ENCODE measurements at regions of chr3 and their contacts with region 1.

Region 1: DNA sequence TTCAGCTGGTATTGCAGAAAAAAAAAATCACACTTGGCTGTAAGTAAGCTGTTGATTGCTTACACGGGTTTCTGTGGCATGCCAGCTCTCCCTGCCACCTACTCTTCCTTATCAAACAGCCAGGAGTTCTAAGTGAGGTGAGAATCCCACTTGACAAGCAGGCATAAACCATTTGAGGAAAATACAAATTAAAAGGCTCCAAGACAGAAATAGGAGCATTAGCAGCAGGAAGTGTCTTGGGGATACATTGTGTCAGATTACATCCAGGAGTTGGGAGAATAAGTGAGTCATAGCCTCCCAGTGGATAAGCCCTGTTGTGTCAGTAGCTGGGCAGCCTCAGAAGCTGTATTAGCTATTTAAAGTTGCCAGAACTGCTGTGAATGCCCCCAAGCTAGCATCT is 256.0 kb downstream of the CNTN4 start:
- DNase-seq: no peak
- ATAC-seq: peak in 3 of 4 donors; percentile 77 to 94 (median 92)
- H3K4me3 ChIP-seq: no peak overlapping the region
- H3K27ac ChIP-seq: no peak overlapping the region
- H3K4me1 ChIP-seq: peaks cover 0 to 12% (median 5%) of the 10 kb centered on the region in 12 donors
- H3K27me3 ChIP-seq: no peaks in the 10 kb centered on the region
- CTCF ChIP-seq: no peak
- POLR2A ChIP-seq: no peak

Region 2: DNA sequence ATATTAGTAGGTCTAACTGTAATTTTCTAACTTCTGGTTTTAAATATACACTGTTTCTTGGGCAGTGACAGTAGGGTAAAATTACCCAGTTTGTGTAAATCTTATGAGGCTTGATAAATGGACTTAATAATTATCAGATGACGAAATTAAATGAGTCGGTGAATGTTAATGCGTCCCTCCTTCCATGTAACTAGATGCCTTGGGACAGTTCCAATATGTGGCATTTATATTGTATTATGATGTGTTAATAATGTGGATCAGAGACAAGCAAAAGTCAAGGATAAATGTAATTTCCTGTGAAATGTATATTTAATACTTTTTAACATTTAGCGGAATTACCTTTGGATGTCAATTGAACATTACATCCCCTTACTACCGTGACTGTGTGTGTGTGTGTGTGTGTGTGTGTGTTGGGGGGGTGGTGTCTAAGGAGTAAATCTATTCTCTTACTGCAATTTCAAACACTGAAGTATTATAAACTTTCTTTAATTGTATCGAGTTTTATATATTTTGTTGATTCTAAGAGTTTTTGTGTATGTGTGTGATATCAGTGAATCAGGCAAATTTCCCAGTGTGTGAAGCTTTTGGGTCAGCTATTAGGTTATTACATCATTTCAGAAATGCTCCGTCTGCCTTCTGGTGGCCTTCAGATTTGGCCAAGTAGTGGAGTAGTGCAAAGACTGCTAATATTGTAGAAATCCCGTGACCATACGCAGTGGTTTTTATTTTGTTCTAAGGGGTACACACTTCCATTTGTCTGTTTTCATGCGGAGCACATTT is 206.0 kb before region 1 on chr3:
- intact Hi-C with region 1: no loop called
- DNase-seq: no peak
- ATAC-seq: no peak
- H3K4me3 ChIP-seq: no peak overlapping the region
- H3K27ac ChIP-seq: no peak overlapping the region
- H3K4me1 ChIP-seq: no peaks in the 10 kb centered on the region
- H3K27me3 ChIP-seq: no peaks in the 10 kb centered on the region
- CTCF ChIP-seq: no peak
- POLR2A ChIP-seq: no peak

Region 3: DNA sequence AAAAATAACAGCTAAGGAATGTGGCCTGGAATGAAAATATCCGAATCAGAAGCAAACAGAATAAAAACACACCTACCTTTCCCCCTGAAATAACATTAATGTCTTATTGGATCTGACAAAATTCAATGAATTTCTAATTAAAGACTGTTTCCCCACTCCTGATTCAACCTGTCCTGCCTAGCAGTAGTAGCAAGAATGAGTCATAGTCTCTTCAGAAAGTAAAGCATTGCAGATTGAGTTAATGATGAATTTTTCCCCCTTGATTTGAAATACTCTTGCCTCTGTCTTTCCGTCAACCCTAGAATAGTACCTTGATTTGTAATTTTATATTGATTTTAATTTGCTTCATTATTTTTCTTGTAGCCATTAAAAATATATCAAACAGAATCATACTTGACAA is 43.7 kb before region 1 on chr3:
- intact Hi-C with region 1: no loop called
- DNase-seq: no peak
- ATAC-seq: no peak
- H3K4me3 ChIP-seq: no peak overlapping the region
- H3K27ac ChIP-seq: no peak overlapping the region
- H3K4me1 ChIP-seq: no peaks in the 10 kb centered on the region
- H3K27me3 ChIP-seq: no peaks in the 10 kb centered on the region
- CTCF ChIP-seq: no peak
- POLR2A ChIP-seq: no peak

Region 4: DNA sequence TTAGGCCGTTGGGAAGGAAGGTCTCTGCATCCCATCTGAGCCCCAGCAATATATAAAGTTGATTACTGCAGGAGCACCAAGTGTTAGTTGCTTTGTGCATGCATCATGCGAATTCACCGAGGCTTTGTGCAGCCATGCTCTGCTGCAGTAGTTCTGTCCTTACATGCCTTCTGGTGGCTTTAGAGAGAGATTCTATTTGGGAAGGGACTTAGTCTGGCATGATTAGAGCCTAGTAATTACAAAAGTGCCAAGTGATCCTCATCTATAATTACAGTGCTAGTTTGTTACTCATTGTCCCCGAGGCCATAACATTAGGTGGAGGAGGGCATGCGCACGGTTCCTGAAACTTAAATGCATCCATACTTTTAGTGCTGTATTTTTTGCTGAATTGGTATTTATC is 97.5 kb after region 1 on chr3:
- intact Hi-C with region 1: loop called in 1 of 10 experiments (anchors 5 kb)
- DNase-seq: no peak
- ATAC-seq: peak in 2 of 4 donors; percentile 26 to 61
- H3K4me3 ChIP-seq: no peak overlapping the region
- H3K27ac ChIP-seq: no peak overlapping the region
- H3K4me1 ChIP-seq: peaks cover 0 to 21% (median 0%) of the 10 kb centered on the region in 12 donors
- H3K27me3 ChIP-seq: no peaks in the 10 kb centered on the region
- CTCF ChIP-seq: no peak
- POLR2A ChIP-seq: no peak

Measured in heart left ventricle (tissue), 16 donors.